ENCODE measurements at regions of chr15 and their contacts with region 1.

Region 1: DNA sequence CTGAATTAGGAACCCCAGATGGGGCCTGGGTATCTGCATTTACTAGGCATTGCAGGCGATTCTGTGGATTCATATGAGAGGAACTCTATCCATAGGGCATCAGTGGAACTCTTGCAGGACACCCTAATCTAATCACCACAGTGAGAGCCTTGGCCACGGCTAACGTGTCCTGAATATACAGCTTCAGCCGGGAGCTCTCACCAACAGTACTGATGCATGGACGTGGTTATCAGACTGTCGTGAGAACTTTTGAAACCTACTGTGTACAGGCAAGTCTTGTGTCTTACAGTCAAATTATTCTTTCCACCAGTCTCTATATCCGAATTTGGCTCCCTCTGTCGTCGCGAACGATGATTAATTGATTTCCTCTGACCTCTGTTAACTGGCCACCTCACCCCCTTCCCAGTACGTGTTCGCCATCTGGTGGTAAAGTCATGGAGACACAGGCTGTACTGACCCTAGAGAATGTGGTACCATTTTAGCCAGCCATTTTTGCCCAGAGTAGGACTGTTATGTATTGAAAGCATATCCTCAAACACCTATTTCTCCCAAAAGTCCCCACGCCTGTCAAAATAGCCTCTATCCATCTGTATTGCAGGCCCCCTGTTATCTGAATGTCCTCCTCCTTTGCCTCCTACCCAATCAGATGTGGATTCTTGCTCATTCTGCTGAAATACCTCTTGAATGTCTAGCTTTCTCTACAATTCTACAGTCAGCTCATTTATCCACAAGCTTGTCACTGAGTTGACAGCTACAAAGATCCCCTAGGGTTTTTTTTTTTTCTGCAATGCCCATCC is 39.7 kb downstream of the GLDN start:
- DNase-seq: peak; percentile 52
- ATAC-seq: peak; percentile 92 to 94

Region 2: GRCh38 chr15:51162865-51163762 is 218.1 kb before region 1 on chr15:
- intact Hi-C with region 1: loop called in 1 of 2 experiments (anchors 5 kb)
- DNase-seq: peak; percentile 70
- ATAC-seq: peak; percentile 94 to 95

Region 3: DNA sequence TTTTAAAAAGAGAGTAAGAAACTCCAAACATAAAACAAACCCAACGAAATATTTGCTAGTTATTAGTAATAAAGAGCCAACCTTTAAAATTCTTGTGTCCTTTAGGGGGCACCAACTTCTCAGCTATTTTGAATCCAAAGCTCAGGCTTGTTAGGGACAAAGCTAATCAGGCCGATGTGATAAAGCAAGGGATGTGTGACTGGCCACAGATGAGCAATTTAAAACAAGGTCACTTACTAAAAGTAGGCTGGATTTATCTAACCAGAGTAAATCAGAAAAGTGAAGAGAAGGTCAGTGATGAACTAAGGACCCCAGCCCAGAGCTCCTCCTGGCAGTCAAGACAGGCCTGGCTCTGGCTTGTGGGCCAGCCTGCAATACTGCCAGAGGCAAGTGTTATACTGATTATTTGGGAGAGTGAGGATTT is 151.3 kb before region 1 on chr15:
- intact Hi-C with region 1: loop called in 1 of 2 experiments (anchors 1 kb)
- DNase-seq: no peak
- ATAC-seq: peak; percentile 57 to 85

Region 4: GRCh38 chr15:51281368-51281967 is 99.7 kb before region 1 on chr15:
- intact Hi-C with region 1: loop called (anchors 1 to 5 kb)
- DNase-seq: peak; percentile 67
- ATAC-seq: peak; percentile 96 to 97

Region 5: GRCh38 chr15:51286791-51287190 is 94.4 kb before region 1 on chr15:
- intact Hi-C with region 1: loop called (anchors 1 to 5 kb)
- DNase-seq: no peak
- ATAC-seq: no peak

Measured in left cardiac atrium (tissue), 4 donors.